ENCODE measurements at regions of chr6 and their contacts with region 1.

Region 1: DNA sequence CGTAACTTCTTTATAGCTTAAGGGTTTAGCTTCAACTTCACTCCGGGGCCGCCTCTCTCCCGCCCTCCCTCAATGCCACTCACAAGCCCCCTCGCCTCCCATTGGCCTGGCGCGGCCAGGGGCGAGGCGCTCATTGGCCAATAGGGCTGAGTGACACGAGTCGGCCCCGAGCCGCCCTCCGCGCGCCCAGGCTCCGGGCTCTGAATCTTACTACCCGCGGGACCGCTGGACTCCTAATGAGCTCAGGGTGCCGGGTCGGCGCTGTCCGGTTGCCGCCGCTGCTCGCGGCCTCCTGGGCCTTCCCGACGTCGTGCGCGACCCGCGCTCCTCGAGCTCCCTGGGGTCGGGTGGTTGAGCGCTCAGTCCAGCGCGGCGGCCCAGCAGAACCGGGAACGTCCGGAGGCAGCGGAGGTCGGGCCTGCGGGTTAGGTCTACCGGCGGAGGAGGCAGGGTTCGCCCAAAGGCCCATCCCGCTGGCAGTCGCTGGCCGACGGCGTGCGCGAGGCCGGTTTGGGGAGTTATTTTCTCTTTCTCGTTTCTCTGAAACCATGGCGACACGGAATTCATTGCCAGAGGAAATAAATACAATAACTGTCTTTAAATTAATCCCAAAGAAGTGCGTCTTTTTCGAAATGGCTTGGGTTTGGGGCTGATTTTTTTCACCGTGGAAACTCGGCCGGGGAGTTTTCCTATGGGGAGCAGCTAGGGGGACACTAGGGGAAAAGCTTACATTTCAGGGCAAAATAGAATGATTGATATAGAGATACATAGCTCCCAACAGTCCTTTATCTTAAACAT is at the start of gene SIM1:
- ATAC-seq: peak; percentile 93 to 98 (median 96)
- H3K4me3 ChIP-seq: peak within 1 kb of the TSS; percentile 18 to 42 (median 37)
- H3K27ac ChIP-seq: no peak within 1 kb of the TSS
- H3K4me1 ChIP-seq: peaks cover 0 to 20% of the 10 kb centered on the region in 2 donors
- total RNA-seq, gene SIM1: 1.5 to 8.3 (median 3.8) TPM

Region 2: DNA sequence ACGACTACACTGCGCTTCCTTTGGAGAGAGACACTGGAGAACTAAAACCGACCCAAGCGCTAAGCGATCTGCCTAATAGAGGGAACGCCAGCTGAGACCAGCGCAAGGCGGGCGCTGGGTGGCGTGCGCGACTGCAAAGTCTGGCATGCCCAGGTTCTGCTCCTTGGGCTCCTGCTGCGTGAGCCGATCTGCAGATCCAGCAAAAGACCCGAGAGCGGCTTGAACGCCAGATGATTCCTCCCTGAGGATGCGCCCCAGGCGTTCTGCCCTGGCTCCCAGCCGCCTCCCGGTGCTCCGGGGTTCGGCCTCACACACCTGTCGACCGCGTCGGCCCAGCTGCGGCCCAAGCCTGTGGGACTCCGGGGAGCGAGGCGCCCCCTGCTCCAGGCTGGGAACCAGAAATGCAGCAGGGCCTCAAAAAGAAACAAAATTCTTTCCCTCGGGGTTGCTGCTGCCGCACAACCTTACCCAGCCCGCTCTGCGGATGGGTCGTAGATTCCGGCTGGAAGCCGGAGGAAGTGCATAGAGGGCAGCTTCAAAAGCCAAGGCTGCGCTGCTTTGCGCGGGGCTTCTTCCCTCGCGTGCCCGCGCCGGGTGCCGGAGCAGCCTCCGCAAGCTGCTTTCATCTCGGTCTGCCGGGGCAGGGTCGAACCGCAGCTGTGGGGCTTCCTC is 876.3 kb before region 1 on chr6:
- in situ Hi-C with region 1: loop called in 1 of 9 experiments (anchors 25 kb)
- ATAC-seq: peak; percentile 91 to 98 (median 96)
- H3K4me3 ChIP-seq: peak overlapping the region; percentile 18 to 38 (median 37)
- H3K27ac ChIP-seq: no peak overlapping the region
- H3K4me1 ChIP-seq: peaks cover 4 to 10% of the 10 kb centered on the region in 2 donors

Region 3: GRCh38 chr6:99613409-99613704 is 851.7 kb before region 1 on chr6:
- in situ Hi-C with region 1: loop called in 2 of 9 experiments (anchors 25 kb)
- ATAC-seq: peak; percentile 65 to 88 (median 87)
- H3K4me3 ChIP-seq: peak overlapping the region; percentile 29 to 54 (median 33)
- H3K27ac ChIP-seq: no peak overlapping the region
- H3K4me1 ChIP-seq: no peaks in the 10 kb centered on the region